ENCODE measurements at regions of chr12 and their contacts with region 1.

Region 1: DNA sequence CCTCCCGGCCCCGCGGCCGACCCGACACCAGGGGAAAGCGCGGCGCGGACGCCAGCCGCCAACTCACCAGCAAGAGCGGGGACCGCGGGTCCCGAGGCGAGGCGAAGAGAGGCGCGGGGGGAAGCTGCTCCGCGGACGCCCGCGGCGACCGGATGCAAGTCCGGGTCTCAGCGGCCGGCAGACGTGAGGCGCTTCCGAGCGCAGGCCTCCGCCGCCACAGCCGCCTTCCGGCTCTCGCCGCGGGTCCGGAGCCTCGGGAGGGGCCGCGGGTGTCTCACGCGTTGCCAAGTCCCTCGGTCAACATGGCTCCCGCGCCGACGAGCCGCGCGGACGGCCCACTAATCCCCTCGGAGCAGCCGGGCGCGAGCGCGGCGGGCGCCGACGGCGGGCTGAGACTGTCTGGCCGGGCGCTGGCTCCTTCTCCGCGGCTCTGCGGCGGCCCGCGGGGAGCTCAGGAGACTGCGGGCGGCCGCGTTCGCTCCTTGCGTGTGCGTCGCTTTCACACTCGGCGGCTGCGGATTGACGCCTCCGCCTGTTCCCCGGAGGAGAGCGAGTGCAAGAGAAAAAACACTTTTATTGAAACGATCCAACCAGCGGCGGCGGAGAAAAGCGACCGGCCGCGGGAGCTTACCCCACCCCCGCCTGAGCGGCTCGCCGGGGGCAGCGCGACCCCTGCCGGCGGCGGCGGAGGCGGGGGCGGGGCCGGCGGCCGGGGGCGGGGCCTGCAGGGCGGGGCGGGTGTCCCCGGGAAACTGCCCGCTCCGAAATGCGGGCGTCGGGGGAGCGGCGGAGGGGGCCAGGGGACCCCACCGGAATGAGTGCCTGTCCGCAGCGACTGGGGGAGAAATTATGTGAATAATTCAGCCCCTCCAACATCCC is at the start of gene CDK17:
- DNase-seq: peak; percentile 71 to 82
- ATAC-seq: peak; percentile 80 to 82
- H3K4me3 ChIP-seq: peak within 1 kb of the TSS; percentile 83 to 97 (median 86)
- H3K27ac ChIP-seq: peak within 1 kb of the TSS; percentile 88 to 98 (median 95)
- H3K4me1 ChIP-seq: peaks cover 31 to 32% of the 10 kb centered on the region in 2 donors
- H3K27me3 ChIP-seq: no peaks in the 10 kb centered on the region
- CTCF ChIP-seq: peak; percentile 9 to 81 (median 59)
- POLR2A ChIP-seq: peak; percentile 78 to 88
- total RNA-seq, gene CDK17: 10.9 to 25.1 (median 20.9) TPM

Region 2: DNA sequence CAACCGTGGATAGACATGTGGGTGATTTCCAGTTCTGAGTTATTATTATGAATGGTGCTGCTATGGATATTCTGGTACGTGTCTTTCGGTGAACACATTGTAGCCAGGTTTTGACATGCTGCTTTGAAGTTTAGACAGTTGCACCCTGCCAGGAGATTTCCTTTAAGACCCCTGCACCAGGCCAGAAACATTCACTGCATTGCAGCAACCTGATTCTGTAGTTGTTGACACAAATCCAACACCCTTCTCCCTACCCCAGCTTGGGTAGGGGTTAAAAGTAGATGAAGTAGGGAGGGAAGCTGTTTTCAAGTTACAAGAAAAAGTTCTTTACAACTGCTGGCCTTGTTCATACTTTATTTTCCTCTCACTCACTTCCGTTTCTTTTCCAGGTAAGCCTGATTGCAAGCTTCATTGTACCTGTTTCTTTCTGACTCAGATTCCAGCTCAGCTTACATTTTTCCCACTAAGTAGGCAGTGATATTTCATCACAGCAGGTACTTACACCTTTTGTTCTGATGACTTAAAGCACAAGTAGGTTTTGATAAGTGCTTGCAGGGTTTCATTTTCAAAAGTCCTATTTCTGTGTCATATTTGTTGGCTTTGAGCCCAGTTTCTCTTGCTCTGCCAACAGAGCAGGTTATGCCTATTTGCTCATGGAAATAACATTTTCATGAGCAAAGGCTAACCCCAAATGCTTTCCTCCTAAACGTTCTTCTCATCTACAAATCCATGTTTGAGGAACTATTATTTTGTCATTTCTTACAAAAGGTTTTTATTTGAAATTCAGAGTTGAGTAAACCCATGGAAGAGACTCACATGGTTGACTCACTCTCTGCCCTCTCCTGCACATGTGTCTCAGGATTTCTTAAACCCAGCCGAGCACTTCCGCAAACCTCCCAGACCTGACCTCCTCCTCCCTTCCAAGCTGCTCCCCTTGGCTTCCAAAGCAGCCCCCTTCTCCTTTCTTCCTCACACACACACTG is 352.6 kb before region 1 on chr12:
- in situ Hi-C with region 1: loop called in 2 of 4 experiments (anchors 10 to 25 kb)
- intact Hi-C with region 1: no loop called
- DNase-seq: peak in 1 of 2 donors; percentile 17
- ATAC-seq: no peak
- H3K4me3 ChIP-seq: no peak overlapping the region
- H3K27ac ChIP-seq: no peak overlapping the region
- H3K4me1 ChIP-seq: no peaks in the 10 kb centered on the region
- H3K27me3 ChIP-seq: no peaks in the 10 kb centered on the region
- CTCF ChIP-seq: no peak
- POLR2A ChIP-seq: no peak

Region 3: GRCh38 chr12:96219698-96220206 is 180.4 kb before region 1 on chr12:
- in situ Hi-C with region 1: loop called in 1 of 4 experiments (anchors 10 kb)
- intact Hi-C with region 1: loop called (anchors 5 kb)
- DNase-seq: no peak
- ATAC-seq: no peak
- H3K4me3 ChIP-seq: no peak overlapping the region
- H3K27ac ChIP-seq: no peak overlapping the region
- H3K4me1 ChIP-seq: peaks cover 11 to 14% of the 10 kb centered on the region in 2 donors
- H3K27me3 ChIP-seq: no peaks in the 10 kb centered on the region
- CTCF ChIP-seq: no peak
- POLR2A ChIP-seq: no peak

Region 4: GRCh38 chr12:96300064-96300463 is 100.1 kb before region 1 on chr12:
- in situ Hi-C with region 1: no loop called
- intact Hi-C with region 1: loop called (anchors 2 kb)
- DNase-seq: no peak
- ATAC-seq: no peak
- H3K4me3 ChIP-seq: no peak overlapping the region
- H3K27ac ChIP-seq: no peak overlapping the region
- H3K4me1 ChIP-seq: no peaks in the 10 kb centered on the region
- H3K27me3 ChIP-seq: no peaks in the 10 kb centered on the region
- CTCF ChIP-seq: no peak
- POLR2A ChIP-seq: no peak

Region 5: GRCh38 chr12:96501139-96501761 is 101.1 kb after region 1 on chr12:
- in situ Hi-C with region 1: no loop called
- intact Hi-C with region 1: loop called (anchors 5 kb)
- DNase-seq: peak in 1 of 2 donors; percentile 6
- ATAC-seq: peak; percentile 69 to 74
- H3K4me3 ChIP-seq: no peak overlapping the region
- H3K27ac ChIP-seq: peak overlapping the region; percentile 58 to 77 (median 66)
- H3K4me1 ChIP-seq: peaks cover 4 to 14% of the 10 kb centered on the region in 2 donors
- H3K27me3 ChIP-seq: no peaks in the 10 kb centered on the region
- CTCF ChIP-seq: no peak
- POLR2A ChIP-seq: no peak